GM12878 (cell line): ENCODE measurements at regions of chr2 and their contacts with region 1.

Region 1: DNA sequence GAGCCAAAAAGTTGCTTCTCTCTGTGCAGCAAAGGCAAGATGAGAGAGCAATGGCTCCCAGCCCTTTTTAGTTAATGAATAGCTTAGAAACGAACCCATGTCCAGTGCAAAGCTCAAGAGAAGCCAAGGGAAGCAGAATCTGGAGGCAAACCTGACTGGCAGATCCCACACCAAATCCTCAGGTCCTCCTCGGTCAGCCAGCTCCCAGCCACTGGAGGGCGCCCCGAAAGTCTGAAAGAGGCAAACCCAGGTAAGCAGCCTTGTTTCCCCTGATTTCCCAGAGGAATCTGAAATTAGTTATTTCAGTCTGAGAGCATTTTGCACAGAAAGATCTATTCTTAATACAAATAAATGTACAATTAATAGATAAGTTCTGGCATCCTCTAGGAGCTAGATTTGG is 71.3 kb upstream of the PID1 start:
- DNase-seq: no peak
- ATAC-seq: no peak
- H3K4me3 ChIP-seq: no peak overlapping the region
- H3K27ac ChIP-seq: no peak overlapping the region
- H3K4me1 ChIP-seq: no peaks in the 10 kb centered on the region
- H3K27me3 ChIP-seq: no peaks in the 10 kb centered on the region
- CTCF ChIP-seq: peak; percentile 33 to 43 (median 41); a peak in 5 of 6 replicates
- EP300 ChIP-seq: no peak
- POLR2A ChIP-seq: no peak
- RAD21 ChIP-seq: 0 out of 2 replicates have a peak, but pooled peaks have one; percentile 10

Region 2: GRCh38 chr2:229243890-229244560 is 98.4 kb before region 1 on chr2:
- CTCF ChIA-PET with region 1: no interaction called
- POLR2A ChIA-PET with region 1: no interaction called
- RAD21 ChIA-PET with region 1: no interaction called
- SMC1A ChIA-PET with region 1: no interaction called
- in situ Hi-C with region 1: no loop called
- intact Hi-C with region 1: no loop called
- DNase-seq: no peak
- ATAC-seq: no peak
- H3K4me3 ChIP-seq: no peak overlapping the region
- H3K27ac ChIP-seq: no peak overlapping the region
- H3K4me1 ChIP-seq: no peaks in the 10 kb centered on the region
- H3K27me3 ChIP-seq: no peaks in the 10 kb centered on the region
- CTCF ChIP-seq: no peak
- EP300 ChIP-seq: no peak
- POLR2A ChIP-seq: no peak
- RAD21 ChIP-seq: no peak

Region 3: DNA sequence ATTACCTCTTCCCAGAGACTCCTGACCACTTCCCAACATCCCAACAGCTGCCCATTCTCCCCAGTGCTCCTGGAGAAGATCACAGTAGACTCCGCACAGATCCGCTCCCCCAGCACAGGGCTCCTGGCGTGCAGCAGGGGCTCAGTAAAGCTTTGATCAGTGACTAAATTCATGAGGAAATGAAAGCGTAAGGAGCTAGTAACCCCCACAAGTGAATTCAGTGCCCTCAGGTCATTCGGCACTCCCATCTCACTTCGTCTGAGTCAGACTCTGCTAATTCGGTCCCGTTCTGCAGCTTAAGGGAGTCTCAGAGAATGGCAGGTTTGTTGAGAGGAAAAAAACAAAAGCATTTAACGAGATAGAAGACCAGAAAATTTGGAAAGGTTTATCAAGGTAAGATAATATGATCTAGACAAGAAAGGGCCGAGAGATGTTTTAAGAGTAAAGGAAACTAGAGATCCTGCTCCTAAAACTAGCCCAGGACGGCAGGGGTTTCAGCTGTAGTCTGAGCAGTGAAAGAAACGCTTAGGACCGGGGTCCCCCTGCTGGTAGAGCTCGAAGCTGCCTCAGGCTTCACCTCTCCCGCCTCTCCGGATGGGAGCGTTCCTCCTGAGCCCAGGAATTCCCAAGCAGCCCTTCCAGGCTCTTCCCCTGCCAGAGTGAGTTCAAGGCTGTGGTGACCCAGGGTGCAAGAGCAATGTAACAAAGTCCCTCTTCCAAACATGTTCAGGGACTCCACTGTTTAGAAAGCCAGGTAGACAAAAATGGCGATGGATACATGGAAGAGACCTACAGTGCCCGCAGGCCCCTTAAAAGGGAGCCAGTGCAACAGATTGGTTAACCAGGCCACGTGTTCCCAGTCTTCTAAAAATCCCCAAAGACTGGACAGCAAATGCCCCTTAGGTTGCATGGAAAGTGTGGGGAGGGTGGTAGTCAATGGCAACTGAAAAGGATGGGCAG is 244.7 kb after region 1 on chr2:
- CTCF ChIA-PET with region 1: no interaction called
- POLR2A ChIA-PET with region 1: no interaction called
- RAD21 ChIA-PET with region 1: interaction called, 4 read pairs
- SMC1A ChIA-PET with region 1: no interaction called
- in situ Hi-C with region 1: no loop called
- intact Hi-C with region 1: loop called (anchors 5 kb)
- DNase-seq: no peak
- ATAC-seq: peak; percentile 92
- H3K4me3 ChIP-seq: no peak overlapping the region
- H3K27ac ChIP-seq: no peak overlapping the region
- H3K4me1 ChIP-seq: no peaks in the 10 kb centered on the region
- H3K27me3 ChIP-seq: no peaks in the 10 kb centered on the region; a peak in 1 of 4 replicates
- CTCF ChIP-seq: peak; percentile 60 to 71 (median 65)
- EP300 ChIP-seq: no peak
- POLR2A ChIP-seq: no peak
- RAD21 ChIP-seq: peak; percentile 56